Sigmoid colon (tissue), 7 donors: ENCODE measurements at regions of chr9 and their contacts with region 1.

Region 1: GRCh38 chr9:17116400-17116837 is 18.4 kb upstream of the CNTLN start:
- DNase-seq: no peak
- H3K4me3 ChIP-seq: no peak overlapping the region
- H3K27ac ChIP-seq: peak overlapping the region in 1 of 4 donors; percentile 52
- H3K4me1 ChIP-seq: peaks cover 0 to 14% (median 5%) of the 10 kb centered on the region in 4 donors
- H3K27me3 ChIP-seq: no peaks in the 10 kb centered on the region
- CTCF ChIP-seq: peak in 3 of 4 experiments; percentile 4 to 49 (median 45)
- EP300 ChIP-seq: no peak
- POLR2A ChIP-seq: no peak

Region 2: GRCh38 chr9:15837079-15837679 is 1279.2 kb before region 1 on chr9:
- intact Hi-C with region 1: loop called (anchors 10 kb)
- DNase-seq: no peak
- H3K4me3 ChIP-seq: no peak overlapping the region
- H3K27ac ChIP-seq: no peak overlapping the region
- H3K4me1 ChIP-seq: no peaks in the 10 kb centered on the region
- H3K27me3 ChIP-seq: no peaks in the 10 kb centered on the region
- CTCF ChIP-seq: peak in 3 of 4 experiments; percentile 42 to 69 (median 48)
- EP300 ChIP-seq: no peak
- POLR2A ChIP-seq: no peak

Region 3: DNA sequence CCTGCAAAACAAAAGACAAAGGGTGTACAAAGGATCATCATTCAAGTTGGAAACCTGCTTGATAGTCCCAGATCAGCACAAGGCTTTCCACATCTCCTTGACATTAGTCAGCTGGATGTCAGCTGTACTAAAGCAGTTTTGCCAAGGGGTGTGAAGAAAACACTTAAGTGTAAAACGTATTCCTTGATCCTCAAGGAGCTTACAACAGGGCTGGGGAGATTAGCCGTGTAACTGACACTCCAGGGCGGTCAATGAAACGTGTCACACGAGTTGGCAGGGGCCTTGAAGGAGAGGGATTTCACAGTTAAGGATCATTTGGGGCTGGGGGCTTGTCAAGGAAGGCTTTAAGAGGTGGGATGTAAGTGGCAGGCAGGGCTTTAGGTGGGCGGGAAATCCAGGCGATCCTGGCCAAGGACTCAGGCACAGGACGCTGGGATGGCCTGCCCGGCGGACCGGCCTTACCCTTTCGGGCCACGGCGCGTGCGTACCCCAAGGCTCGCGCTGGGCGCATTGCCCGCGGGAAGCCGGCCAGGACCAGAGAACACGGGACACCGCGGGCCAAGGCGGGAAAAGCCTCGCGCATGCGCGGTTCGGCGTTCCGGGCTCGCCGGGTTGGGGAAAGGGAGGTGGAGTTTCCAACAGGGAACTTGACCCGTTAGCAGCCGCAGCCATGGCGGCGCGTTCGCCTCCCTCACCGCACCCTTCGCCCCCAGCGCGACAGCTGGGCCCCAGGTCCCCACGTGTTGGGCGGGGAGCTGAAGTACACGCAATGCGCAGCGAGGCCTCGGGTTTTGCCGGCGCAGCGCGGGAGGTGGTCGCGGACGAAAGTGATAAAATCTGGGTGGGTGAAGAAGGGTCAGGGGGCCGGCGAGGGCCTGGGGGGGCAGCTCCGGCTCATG is 18.2 kb after region 1 on chr9 and contains the start of gene CNTLN:
- intact Hi-C with region 1: loop called (anchors 2 kb)
- DNase-seq: peak; percentile 98
- H3K4me3 ChIP-seq: peak within 1 kb of the TSS; percentile 71 to 96 (median 78)
- H3K27ac ChIP-seq: peak within 1 kb of the TSS; percentile 84 to 92 (median 87)
- H3K4me1 ChIP-seq: peaks cover 0 to 13% (median 8%) of the 10 kb centered on the region in 4 donors
- H3K27me3 ChIP-seq: no peaks in the 10 kb centered on the region
- CTCF ChIP-seq: no peak
- EP300 ChIP-seq: peak in 1 of 4 donors; percentile 30
- POLR2A ChIP-seq: peak in 1 of 2 donors; percentile 38
- total RNA-seq, gene CNTLN: 12.1 to 22.4 (median 19.1) TPM

Region 4: DNA sequence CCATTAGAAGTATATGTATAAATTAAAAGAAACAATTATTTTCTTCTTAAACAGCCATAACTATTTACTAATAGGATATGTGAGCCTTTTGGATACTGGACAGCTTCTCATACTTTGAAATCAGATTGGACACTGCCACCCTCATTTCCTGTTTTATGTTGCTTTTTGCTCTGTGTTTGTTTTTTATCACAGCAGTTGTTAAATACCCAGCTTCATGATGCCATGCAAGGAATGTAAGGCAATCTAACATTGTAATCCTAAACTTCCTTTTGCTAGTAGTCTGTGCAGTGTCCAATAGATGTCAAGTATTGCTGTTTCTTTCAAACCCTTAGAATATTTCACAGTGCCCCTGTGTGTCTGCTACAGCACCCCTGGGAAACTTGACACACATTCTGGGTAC is 74.7 kb after region 1 on chr9:
- intact Hi-C with region 1: no loop called
- DNase-seq: no peak
- H3K4me3 ChIP-seq: no peak overlapping the region
- H3K27ac ChIP-seq: no peak overlapping the region
- H3K4me1 ChIP-seq: peaks cover 0 to 12% (median 2%) of the 10 kb centered on the region in 4 donors
- H3K27me3 ChIP-seq: no peaks in the 10 kb centered on the region
- CTCF ChIP-seq: no peak
- EP300 ChIP-seq: no peak
- POLR2A ChIP-seq: no peak

Region 5: DNA sequence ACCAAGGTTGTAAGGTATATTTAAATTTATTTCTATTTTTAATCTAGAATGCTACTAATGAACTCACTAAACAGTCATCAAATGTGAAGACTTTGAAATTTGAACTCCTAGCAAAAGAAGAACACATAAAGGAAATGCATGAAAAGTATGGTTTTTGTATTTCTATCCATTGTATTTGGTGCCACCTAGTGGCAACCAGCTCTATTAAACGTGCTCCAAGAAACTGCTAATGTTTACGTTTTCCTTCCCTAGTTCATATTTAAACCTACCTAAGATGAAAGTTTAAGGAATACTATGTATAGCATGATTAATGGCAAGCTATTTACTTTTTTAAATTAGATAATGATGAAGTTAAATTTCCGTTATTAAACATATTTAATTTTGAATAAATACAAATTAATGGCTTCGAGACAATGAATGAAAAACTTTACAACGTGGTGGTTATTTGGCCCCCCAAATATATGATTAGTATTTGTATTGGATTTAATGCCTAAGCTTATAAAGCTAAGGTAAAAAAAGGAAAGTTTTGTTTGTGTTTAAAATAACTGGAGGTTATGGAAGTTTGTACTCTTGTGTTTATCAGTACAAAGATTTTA is 346.5 kb after region 1 on chr9:
- intact Hi-C with region 1: loop called (anchors 5 kb)
- DNase-seq: no peak
- H3K4me3 ChIP-seq: no peak overlapping the region
- H3K27ac ChIP-seq: no peak overlapping the region
- H3K4me1 ChIP-seq: no peaks in the 10 kb centered on the region
- H3K27me3 ChIP-seq: no peaks in the 10 kb centered on the region
- CTCF ChIP-seq: peak; percentile 24 to 78 (median 59)
- EP300 ChIP-seq: no peak
- POLR2A ChIP-seq: no peak